A549 (cell line): ENCODE measurements at regions of chr9 and their contacts with region 1.

Region 1: DNA sequence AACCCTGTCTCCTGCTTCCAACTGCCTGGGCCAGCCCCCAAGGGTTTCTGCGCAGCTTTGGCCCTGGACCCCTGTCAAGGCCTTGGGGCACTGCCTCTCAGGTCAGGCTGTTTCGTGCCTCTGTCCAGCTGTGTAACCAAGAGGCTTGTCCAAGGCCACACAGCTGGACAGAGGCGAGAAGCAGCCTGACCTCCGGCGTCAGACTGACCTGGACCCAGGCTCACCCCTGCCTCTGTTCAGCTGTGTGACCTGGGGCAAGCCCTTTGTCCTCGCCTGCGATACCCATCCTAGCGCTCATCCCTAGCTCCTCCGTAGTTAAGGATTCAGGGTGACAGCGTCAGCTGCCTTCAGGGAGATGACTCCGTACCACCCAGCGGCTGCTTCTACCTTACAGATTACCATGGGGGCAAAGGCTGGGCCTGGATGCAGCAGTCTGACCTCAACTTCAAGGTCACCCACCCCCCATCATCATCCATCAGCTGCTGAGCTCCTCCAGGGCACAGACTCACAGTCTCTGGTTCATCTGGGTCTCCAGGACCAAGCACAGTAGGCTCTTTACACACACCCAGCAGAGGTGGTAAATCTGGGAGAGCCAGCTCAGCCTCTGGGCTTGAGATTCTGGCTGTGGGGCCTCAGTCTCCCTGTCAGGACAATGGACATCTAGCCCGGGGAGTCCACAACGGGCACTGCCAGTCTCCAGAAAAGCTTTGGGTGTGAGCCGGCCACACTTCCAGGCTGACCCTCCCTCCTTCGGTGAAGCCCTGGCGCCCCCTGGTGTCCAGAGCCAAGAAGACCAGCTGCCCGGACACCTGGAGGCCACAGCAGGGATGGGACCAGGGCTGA is 7.9 kb downstream of the AK1 start:
- DNase-seq: peak; percentile 81 to 96
- ATAC-seq: peak; percentile 88 to 97
- H3K4me3 ChIP-seq: no peak overlapping the region
- H3K27ac ChIP-seq: peak overlapping the region in 1 of 2 experiments; percentile 45; a peak in 1 of 6 replicates
- H3K4me1 ChIP-seq: peaks cover 7% of the 10 kb centered on the region
- CTCF ChIP-seq: peak; percentile 82
- EP300 ChIP-seq: no peak
- POLR2A ChIP-seq: no peak
- RAD21 ChIP-seq: peak; percentile 89 to 96

Region 2: DNA sequence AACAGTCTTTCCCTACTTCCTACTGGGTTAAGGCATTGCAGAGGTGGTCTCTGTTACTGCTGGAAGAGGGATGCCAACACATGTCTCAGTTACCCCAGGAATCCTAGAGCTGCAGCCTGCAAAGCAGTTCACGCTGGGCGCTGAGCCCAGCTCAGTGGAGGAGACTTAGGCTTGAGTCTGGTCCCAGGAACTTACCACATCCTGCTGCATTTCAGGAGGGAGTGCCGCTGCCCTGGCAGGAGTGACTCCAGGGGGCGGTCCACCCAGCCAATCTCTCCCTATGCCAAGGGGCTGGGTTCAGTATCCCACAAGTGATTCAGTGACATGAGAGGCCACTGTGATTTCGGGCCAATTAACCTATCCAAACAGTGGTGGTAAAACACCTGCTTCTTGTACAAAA is 146.1 kb before region 1 on chr9:
- CTCF ChIA-PET with region 1: interaction called, 20 read pairs
- POLR2A ChIA-PET with region 1: no interaction called
- DNase-seq: no peak
- ATAC-seq: no peak
- H3K4me3 ChIP-seq: no peak overlapping the region
- H3K27ac ChIP-seq: no peak overlapping the region
- H3K4me1 ChIP-seq: peaks cover 25% of the 10 kb centered on the region
- CTCF ChIP-seq: no peak
- EP300 ChIP-seq: no peak
- POLR2A ChIP-seq: no peak
- RAD21 ChIP-seq: no peak

Region 3: DNA sequence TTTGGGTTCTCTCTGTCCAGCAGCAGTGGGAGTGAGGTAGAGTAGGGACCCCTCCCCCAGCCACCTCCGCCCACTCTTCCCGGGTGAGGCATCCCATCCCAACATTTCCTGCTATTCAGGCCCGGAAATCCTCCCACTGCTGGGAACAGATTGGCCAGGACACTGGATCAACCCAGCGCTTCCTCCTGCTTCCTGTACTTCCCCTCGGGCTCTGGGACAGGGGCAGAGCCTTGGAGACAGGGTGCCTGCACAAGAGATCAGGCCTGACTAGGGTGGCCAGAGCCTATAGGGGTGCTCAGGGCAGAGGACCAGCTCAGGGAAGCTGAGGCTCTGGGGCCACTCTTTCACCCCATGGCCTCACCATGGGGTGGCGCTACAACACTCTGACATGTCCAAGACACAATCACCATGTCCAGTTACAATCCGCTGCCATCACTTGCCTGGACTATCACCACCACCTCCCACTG is 105.6 kb before region 1 on chr9:
- CTCF ChIA-PET with region 1: interaction called, 10 read pairs
- POLR2A ChIA-PET with region 1: no interaction called
- DNase-seq: peak in 1 of 2 experiments; percentile 58
- ATAC-seq: peak; percentile 40 to 78; a peak in 4 of 6 replicates
- H3K4me3 ChIP-seq: no peak overlapping the region
- H3K27ac ChIP-seq: no peak overlapping the region
- H3K4me1 ChIP-seq: no peaks in the 10 kb centered on the region
- CTCF ChIP-seq: no peak
- EP300 ChIP-seq: no peak
- POLR2A ChIP-seq: no peak
- RAD21 ChIP-seq: peak in 1 of 2 experiments; percentile 24; a peak in 1 of 5 replicates

Region 4: GRCh38 chr9:127802576-127803443 is 66.7 kb before region 1 on chr9 and contains the start of gene FPGS:
- CTCF ChIA-PET with region 1: interaction called, 27 read pairs
- POLR2A ChIA-PET with region 1: interaction called, 3 read pairs
- DNase-seq: peak; percentile 91 to 95
- ATAC-seq: peak; percentile 86 to 90
- H3K4me3 ChIP-seq: peak within 1 kb of the TSS; percentile 85
- H3K27ac ChIP-seq: peak within 1 kb of the TSS; percentile 93 to 96
- H3K4me1 ChIP-seq: peaks cover 38% of the 10 kb centered on the region
- CTCF ChIP-seq: 0 out of 3 replicates have a peak, but pooled peaks have one; percentile 3
- EP300 ChIP-seq: no peak
- POLR2A ChIP-seq: peak; percentile 62
- RAD21 ChIP-seq: 0 out of 5 replicates have a peak, but pooled peaks of 1 of the 2 experiments have one; percentile 12
- polyA plus RNA-seq, gene FPGS: 28.8 and 33.4 TPM in 2 replicates

Region 5: GRCh38 chr9:127847155-127847463 is 22.4 kb before region 1 on chr9:
- CTCF ChIA-PET with region 1: interaction called, 60 read pairs
- POLR2A ChIA-PET with region 1: no interaction called
- DNase-seq: no peak
- ATAC-seq: peak; percentile 27 to 40; a peak in 3 of 6 replicates
- H3K4me3 ChIP-seq: no peak overlapping the region
- H3K27ac ChIP-seq: no peak overlapping the region
- H3K4me1 ChIP-seq: no peaks in the 10 kb centered on the region
- CTCF ChIP-seq: no peak
- EP300 ChIP-seq: no peak
- POLR2A ChIP-seq: no peak
- RAD21 ChIP-seq: no peak

Region 6: DNA sequence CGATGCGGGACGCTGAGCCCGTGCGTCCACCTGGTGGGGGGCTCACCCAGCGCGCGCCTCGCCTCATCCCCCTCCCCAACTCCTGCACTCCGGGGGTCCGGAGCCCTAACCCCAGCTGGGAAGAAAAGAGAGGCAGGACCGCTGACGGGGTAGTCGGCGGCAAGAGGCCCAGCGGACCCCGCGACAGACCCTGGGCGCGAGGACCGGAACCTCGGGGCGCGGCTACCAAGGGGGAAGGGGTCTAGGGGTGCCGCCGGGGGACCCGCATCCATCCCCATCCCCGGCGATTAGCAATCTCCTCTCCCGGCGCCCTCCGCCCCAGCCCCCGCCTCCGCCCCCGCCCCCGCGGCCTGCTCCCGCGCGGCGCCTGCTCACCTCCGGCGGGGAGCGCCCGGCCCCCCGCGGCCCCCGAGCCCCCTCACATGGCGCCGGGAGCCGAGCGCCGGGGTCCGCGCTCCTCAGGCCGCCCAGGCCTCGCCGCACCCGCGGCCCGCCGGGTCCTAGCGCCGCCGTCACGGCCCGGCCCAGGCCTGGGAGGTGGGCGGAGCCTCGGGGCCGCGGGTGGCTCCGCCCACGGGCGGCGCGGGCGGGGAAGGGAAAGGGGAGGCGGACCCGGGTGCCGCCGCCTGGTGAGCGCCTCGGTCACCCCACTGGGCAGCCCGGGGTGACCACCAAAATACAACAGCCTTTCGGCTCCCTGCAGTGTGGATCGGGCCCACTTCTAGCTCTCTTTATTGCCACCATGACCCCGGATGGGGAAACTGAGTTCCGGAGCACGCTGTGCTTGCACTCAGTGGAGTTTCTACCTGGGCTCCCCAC is 29.8 kb after region 1 on chr9 and contains the start of gene ST6GALNAC6:
- CTCF ChIA-PET with region 1: interaction called, 27 read pairs
- POLR2A ChIA-PET with region 1: no interaction called
- DNase-seq: peak; percentile 65 to 69
- ATAC-seq: peak; percentile 74
- H3K4me3 ChIP-seq: peak within 1 kb of the TSS; percentile 76
- H3K27ac ChIP-seq: peak within 1 kb of the TSS; percentile 85 to 94
- H3K4me1 ChIP-seq: peaks cover 33% of the 10 kb centered on the region
- CTCF ChIP-seq: no peak
- EP300 ChIP-seq: no peak
- POLR2A ChIP-seq: peak; percentile 36
- RAD21 ChIP-seq: no peak
- polyA plus RNA-seq, gene ST6GALNAC6: 8.2 and 14.7 TPM in 2 replicates